MCF 10A (cell line): ENCODE measurements at regions of chr6 and their contacts with region 1.

Region 1: DNA sequence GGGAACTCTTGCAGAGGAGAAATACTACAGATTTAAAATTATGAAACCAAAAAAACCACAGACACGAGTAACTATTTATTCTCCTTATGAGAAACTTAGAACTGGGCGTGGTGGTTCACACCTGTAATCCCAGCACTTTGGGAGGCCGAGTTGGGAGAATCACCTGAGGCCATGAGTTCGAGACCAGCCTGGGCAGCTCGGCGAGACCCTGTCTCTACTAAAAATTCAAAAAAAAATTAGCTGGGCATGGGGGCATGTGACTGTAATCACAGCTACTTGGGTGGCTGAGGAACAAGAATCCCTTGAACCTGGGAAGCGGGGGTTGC is 36.8 kb downstream of the SSR1 start:
- DNase-seq: no peak
- H3K4me3 Mint-ChIP-seq: no peak overlapping the region
- H3K27ac Mint-ChIP-seq: no peak overlapping the region
- H3K4me1 Mint-ChIP-seq: peaks cover 14% of the 10 kb centered on the region
- H3K27me3 Mint-ChIP-seq: no peaks in the 10 kb centered on the region
- CTCF ChIP-seq: no peak

Region 2: GRCh38 chr6:7292596-7293255 is 16.6 kb after region 1 on chr6:
- CTCF ChIA-PET with region 1: interaction called, 11 read pairs
- POLR2A ChIA-PET with region 1: interaction called, 3 read pairs
- intact Hi-C with region 1: no loop called
- DNase-seq: no peak
- H3K4me3 Mint-ChIP-seq: no peak overlapping the region
- H3K27ac Mint-ChIP-seq: peak overlapping the region; percentile 9
- H3K4me1 Mint-ChIP-seq: no peaks in the 10 kb centered on the region
- H3K27me3 Mint-ChIP-seq: no peaks in the 10 kb centered on the region
- CTCF ChIP-seq: no peak